GM13976 (cell line): ENCODE measurements at regions of chr15 and their contacts with region 1.

Region 1: DNA sequence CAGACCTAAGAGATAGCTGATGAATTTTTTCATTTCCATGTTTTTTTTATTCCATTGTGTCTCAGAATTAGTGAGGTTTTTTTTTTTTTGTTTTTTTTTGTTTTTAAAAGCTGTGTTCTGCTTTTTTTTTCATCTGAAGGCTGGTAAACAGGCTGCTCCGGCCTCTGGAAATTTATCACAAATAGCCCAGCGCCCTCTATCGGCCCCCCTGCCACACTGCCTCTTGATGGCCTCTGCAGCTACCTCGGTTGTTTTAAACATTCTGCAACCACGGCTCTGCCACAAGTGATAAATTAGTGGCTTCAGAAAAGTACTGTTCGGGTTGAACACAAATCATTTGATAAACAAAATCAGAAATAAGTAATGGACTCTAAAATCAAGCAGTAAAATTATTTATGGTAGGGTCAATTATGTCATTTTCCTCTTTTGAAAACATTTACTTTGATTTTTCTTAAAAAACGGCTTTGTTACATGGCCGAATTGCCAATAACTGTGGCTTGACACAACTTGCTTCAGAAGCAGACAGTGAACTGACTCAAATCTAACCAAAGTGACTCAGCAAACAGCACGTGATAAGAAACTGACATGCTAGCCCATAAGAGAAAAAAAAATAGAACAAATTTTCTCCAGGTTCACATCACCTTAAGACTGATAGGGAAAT is 87.8 kb downstream of the RSL24D1 start:
- DNase-seq: peak; percentile 49
- CTCF ChIP-seq: peak; percentile 78

Region 2: GRCh38 chr15:54082836-54083492 is 1026.0 kb before region 1 on chr15:
- in situ Hi-C with region 1: loop called (anchors 10 kb)
- DNase-seq: peak; percentile 27
- CTCF ChIP-seq: peak; percentile 49

Region 3: DNA sequence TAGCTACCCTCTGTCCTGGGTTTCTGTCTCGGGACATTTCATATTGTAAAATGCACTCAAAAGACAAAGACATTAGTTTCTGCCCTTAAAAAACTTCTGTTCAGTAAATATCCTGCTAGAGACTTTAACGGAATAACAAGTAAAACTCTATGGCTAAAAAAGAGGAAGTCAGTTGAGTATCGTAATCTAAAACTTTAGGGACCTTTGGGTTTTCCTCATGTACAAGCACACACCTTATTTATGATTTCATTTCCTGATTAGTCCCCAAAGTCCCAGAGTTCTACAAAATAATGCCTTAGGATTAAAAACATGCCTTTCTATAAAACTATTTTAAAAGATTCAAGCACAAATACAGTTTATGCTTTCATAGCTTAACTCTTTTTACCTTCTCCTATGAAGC is 544.8 kb before region 1 on chr15:
- in situ Hi-C with region 1: no loop called
- DNase-seq: no peak
- CTCF ChIP-seq: no peak